HAP-1 (cell line): ENCODE measurements at regions of chr14 and their contacts with region 1.

Region 1: GRCh38 chr14:77059276-77059915 is 30.9 kb upstream of the IRF2BPL start:
- DNase-seq: peak in 1 of 2 experiments; percentile 48
- H3K4me3 ChIP-seq: no peak overlapping the region
- H3K4me1 ChIP-seq: no peaks in the 10 kb centered on the region
- H3K27me3 ChIP-seq: no peaks in the 10 kb centered on the region

Region 2: DNA sequence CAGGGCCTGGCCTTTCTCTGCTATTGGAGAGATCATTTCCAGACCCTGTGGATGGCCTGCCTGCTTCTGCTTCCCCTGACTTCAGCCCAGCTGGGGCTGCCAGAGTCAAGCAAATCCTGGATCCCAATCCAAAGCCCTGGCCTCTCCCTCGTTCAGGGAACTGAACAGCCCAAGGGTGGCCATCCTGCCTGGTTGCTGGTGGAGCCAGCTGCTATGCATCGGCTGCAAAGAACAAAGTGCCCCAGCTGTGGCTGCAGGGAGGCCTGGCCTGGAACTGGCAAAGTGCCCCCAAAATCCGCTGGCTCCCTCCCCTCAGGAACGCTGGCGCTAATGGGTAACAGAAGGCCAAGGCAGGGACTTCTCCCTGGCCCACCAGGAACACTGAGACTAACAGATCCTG is 176.7 kb before region 1 on chr14:
- in situ Hi-C with region 1: loop called (anchors 5 kb)
- DNase-seq: no peak
- H3K4me3 ChIP-seq: no peak overlapping the region
- H3K4me1 ChIP-seq: no peaks in the 10 kb centered on the region
- H3K27me3 ChIP-seq: peaks cover 6% of the 10 kb centered on the region; the same call in 1 of the 2 replicates

Region 3: DNA sequence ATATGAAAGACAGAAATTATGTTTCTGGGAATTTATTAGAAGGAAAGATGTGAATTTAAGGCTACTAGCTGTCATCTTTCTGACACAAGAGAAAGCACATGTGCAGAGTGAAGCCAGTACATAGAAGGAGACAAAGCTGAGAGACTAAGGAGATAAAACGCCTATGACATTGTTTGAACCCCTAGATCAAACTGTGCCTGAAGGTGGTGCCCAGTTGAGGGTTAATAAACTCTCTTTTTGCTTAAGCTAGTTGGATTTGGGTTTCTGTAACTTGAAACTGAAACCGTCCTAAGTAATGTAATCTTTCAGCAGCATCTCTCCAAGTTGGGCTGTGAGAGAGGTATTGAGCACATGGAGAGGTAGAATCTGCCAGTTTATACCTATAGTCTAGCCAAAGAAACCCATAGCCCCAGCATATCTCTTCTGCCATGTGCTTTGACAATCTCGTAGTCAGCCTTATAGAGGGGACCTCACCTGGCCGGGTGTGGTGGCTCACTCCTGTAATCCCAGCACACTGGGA is 149.0 kb before region 1 on chr14:
- in situ Hi-C with region 1: loop called (anchors 5 kb)
- DNase-seq: no peak
- H3K4me3 ChIP-seq: no peak overlapping the region
- H3K4me1 ChIP-seq: peaks cover 2% of the 10 kb centered on the region; the same call in 1 of the 2 replicates
- H3K27me3 ChIP-seq: no peaks in the 10 kb centered on the region